Endothelial cell of umbilical vein (primary cell): ENCODE measurements at regions of chr11 and their contacts with region 1.

Region 1: GRCh38 chr11:108871152-108871551 is 206.3 kb downstream of the DDX10 start:
- DNase-seq: peak; percentile 81
- H3K4me3 ChIP-seq: peak overlapping the region in 1 of 3 experiments; percentile 74
- H3K27ac ChIP-seq: peak overlapping the region; percentile 100
- H3K4me1 ChIP-seq: peaks cover 63% of the 10 kb centered on the region
- H3K27me3 ChIP-seq: no peaks in the 10 kb centered on the region
- CTCF ChIP-seq: peak; percentile 55 to 63
- POLR2A ChIP-seq: no peak

Region 2: DNA sequence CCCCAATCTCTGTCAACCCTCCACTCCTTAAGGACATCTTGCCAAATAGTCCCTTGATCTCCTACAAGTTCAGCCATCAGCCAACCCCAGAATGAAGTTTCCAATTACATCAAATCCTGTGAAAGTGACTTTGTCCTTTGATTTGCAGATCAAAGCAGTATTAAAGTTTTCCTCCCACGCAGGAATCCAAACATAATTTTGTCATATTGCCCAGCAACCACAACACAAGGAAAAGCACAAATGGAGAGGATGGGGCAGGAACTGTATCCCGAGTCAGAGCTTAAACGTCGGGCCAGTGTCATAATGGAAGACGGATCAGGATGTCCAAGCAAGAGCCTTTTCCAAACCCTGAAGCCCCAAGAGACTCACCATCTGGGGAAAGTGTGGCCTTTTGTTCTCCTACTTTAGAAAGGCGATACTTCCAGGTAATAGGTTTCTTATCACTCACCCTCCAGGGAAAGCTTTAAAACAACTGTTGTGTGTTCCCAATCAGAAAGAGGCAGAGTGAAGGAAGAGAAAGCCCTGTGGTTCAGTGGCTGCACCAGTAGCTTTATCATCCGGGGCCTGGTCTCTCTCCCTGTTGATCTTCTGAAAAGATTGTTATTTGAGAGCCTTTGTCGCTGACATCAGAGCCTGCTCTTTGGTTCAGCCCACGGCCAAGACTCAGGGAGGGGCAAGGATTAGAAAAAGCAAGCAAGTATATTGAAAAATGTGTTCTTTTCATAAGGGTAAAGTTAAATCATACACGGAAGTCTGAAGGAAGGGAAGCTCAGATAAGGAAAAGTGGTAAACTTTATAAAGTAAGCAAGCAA is 319.3 kb before region 1 on chr11:
- CTCF ChIA-PET with region 1: no interaction called
- POLR2A ChIA-PET with region 1: no interaction called
- dilution Hi-C with region 1: no loop called
- intact Hi-C with region 1: no loop called
- DNase-seq: no peak
- H3K4me3 ChIP-seq: no peak overlapping the region
- H3K27ac ChIP-seq: no peak overlapping the region
- H3K4me1 ChIP-seq: no peaks in the 10 kb centered on the region
- H3K27me3 ChIP-seq: no peaks in the 10 kb centered on the region
- CTCF ChIP-seq: no peak
- POLR2A ChIP-seq: no peak

Region 3: GRCh38 chr11:108697872-108698473 is 173.2 kb before region 1 on chr11:
- CTCF ChIA-PET with region 1: interaction called, 95 read pairs
- POLR2A ChIA-PET with region 1: no interaction called
- dilution Hi-C with region 1: no loop called
- intact Hi-C with region 1: loop called (anchors 1 kb)
- DNase-seq: peak; percentile 78
- H3K4me3 ChIP-seq: no peak overlapping the region
- H3K27ac ChIP-seq: no peak overlapping the region
- H3K4me1 ChIP-seq: no peaks in the 10 kb centered on the region
- H3K27me3 ChIP-seq: no peaks in the 10 kb centered on the region
- CTCF ChIP-seq: peak; percentile 78 to 79
- POLR2A ChIP-seq: no peak

Region 4: GRCh38 chr11:108853864-108854263 is 17.3 kb before region 1 on chr11:
- CTCF ChIA-PET with region 1: interaction called, 33 read pairs
- POLR2A ChIA-PET with region 1: no interaction called
- dilution Hi-C with region 1: no loop called
- intact Hi-C with region 1: loop called (anchors 1 kb)
- DNase-seq: peak; percentile 49
- H3K4me3 ChIP-seq: peak overlapping the region in 1 of 3 experiments; percentile 71
- H3K27ac ChIP-seq: peak overlapping the region; percentile 70
- H3K4me1 ChIP-seq: peaks cover 32% of the 10 kb centered on the region
- H3K27me3 ChIP-seq: no peaks in the 10 kb centered on the region
- CTCF ChIP-seq: no peak
- POLR2A ChIP-seq: no peak

Region 5: DNA sequence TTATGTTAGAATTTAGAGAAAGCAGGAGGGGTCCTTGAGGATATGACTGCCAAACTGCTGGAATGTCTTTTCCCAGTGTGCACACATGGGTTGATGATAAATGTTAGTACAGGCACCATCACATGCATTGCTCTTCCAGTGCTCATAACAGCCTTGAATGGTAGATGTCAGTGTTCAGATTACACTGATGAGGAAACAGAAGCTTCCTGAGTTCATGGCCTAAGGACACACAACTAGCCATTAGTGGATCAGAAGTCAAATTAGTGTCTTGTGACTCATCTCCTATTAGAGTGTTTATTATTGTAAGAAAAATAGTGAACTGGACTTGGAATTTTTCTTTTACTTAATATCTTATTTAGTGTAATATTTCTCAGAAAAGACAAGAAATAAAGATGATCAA is 35.2 kb after region 1 on chr11:
- CTCF ChIA-PET with region 1: interaction called, 7 read pairs
- POLR2A ChIA-PET with region 1: no interaction called
- dilution Hi-C with region 1: no loop called
- intact Hi-C with region 1: loop called (anchors 1 kb)
- DNase-seq: peak; percentile 97
- H3K4me3 ChIP-seq: peak overlapping the region in 1 of 3 experiments; percentile 14
- H3K27ac ChIP-seq: peak overlapping the region; percentile 71
- H3K4me1 ChIP-seq: peaks cover 20% of the 10 kb centered on the region
- H3K27me3 ChIP-seq: no peaks in the 10 kb centered on the region
- CTCF ChIP-seq: no peak
- POLR2A ChIP-seq: peak; percentile 86

Region 6: DNA sequence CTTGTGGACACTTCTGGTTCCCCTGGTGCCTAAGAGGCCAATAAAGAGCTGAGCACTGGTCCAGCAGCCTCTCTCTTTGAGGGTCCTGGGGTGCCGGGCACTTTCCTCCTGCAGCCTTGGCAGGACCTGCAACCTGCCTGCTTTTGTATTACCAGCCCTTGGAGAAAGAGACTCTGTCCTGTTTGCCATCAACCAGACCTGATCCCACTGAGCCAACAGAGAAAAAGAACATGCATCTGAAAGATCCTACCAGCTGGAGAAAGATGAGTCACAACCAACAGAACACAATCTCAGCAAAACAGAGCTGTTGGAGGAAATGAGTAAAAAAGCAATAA is 114.8 kb after region 1 on chr11:
- CTCF ChIA-PET with region 1: no interaction called
- POLR2A ChIA-PET with region 1: no interaction called
- dilution Hi-C with region 1: no loop called
- intact Hi-C with region 1: loop called (anchors 2 kb)
- DNase-seq: peak; percentile 88
- H3K4me3 ChIP-seq: peak overlapping the region in 1 of 3 experiments; percentile 12
- H3K27ac ChIP-seq: peak overlapping the region; percentile 84
- H3K4me1 ChIP-seq: peaks cover 24% of the 10 kb centered on the region
- H3K27me3 ChIP-seq: no peaks in the 10 kb centered on the region
- CTCF ChIP-seq: no peak
- POLR2A ChIP-seq: no peak

Region 7: DNA sequence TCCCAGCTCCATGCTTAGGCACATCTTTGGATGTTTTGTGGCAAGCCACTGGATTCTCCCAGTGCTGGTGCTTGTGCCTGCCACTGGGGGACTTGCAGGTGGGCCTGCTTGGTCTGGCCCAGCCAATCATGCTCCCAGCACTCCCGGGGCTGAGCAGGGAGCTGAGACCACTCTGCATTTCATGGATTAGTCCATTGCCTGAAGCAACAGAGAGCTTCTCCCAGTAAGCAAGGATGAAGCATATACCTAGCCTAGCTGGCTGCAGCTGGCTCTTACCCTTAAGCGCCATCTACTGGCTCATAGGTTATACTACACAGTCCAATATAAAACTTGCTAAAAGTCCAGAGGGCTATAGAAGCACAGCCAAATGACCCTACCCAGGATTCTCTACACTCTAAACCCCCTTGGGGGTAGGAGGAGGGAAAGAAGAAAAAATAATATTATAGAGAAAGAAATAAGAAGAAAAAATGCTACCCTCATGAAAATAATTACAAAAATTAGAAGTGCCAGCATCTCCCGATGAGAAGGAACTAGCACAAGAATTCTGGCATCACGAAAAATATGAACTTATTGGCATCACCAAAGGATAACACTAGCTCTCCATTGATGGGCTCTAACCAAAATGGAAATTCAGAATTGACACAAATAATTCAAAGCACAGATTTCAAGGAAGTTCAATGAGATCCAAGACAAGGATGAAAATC is 826.1 kb after region 1 on chr11:
- CTCF ChIA-PET with region 1: interaction called, 10 read pairs
- POLR2A ChIA-PET with region 1: no interaction called
- dilution Hi-C with region 1: no loop called
- intact Hi-C with region 1: loop called (anchors 2 kb)
- DNase-seq: peak; percentile 44
- H3K4me3 ChIP-seq: no peak overlapping the region
- H3K27ac ChIP-seq: no peak overlapping the region
- H3K4me1 ChIP-seq: no peaks in the 10 kb centered on the region
- H3K27me3 ChIP-seq: no peaks in the 10 kb centered on the region
- CTCF ChIP-seq: peak; percentile 59 to 68
- POLR2A ChIP-seq: no peak